CD4-positive, alpha-beta memory T cell (primary cell): ENCODE measurements at regions of chr2 and their contacts with region 1.

Region 1: GRCh38 chr2:181312515-181312927 is 144.7 kb upstream of the ITGA4 start:
- DNase-seq: peak; percentile 38 to 55 (median 45)
- H3K4me3 ChIP-seq: peak overlapping the region in 1 of 2 donors; percentile 27
- H3K4me3 Mint-ChIP-seq: peak overlapping the region; percentile 12 to 77 (median 71)
- H3K27ac ChIP-seq: peak overlapping the region; percentile 46
- H3K27ac Mint-ChIP-seq: peak overlapping the region; percentile 88 to 97 (median 95)
- H3K4me1 ChIP-seq: peaks cover 75% of the 10 kb centered on the region
- H3K4me1 Mint-ChIP-seq: peaks cover 34 to 56% (median 46%) of the 10 kb centered on the region in 4 donors
- H3K27me3 ChIP-seq: no peaks in the 10 kb centered on the region
- H3K27me3 Mint-ChIP-seq: no peaks in the 10 kb centered on the region

Region 2: GRCh38 chr2:180980106-180980942 is 332.2 kb before region 1 on chr2 and contains the start of gene UBE2E3:
- CTCF ChIA-PET with region 1: no interaction called
- POLR2A ChIA-PET with region 1: no interaction called
- intact Hi-C with region 1: no loop called
- DNase-seq: peak; percentile 77 to 83 (median 81)
- H3K4me3 ChIP-seq: peak within 1 kb of the TSS; percentile 59
- H3K4me3 Mint-ChIP-seq: peak within 1 kb of the TSS; percentile 94 to 99 (median 98)
- H3K27ac ChIP-seq: peak within 1 kb of the TSS; percentile 49
- H3K27ac Mint-ChIP-seq: peak within 1 kb of the TSS; percentile 89 to 98 (median 97)
- H3K4me1 ChIP-seq: peaks cover 35% of the 10 kb centered on the region
- H3K4me1 Mint-ChIP-seq: peaks cover 29 to 55% (median 44%) of the 10 kb centered on the region in 4 donors
- H3K27me3 ChIP-seq: no peaks in the 10 kb centered on the region
- H3K27me3 Mint-ChIP-seq: no peaks in the 10 kb centered on the region
- total RNA-seq, gene UBE2E3: 25.0 to 27.0 TPM

Region 3: GRCh38 chr2:181140414-181140813 is 172.1 kb before region 1 on chr2:
- CTCF ChIA-PET with region 1: interaction called, 3 read pairs
- POLR2A ChIA-PET with region 1: interaction called, 20 read pairs
- intact Hi-C with region 1: no loop called
- DNase-seq: peak in 1 of 5 donors; percentile 66
- H3K4me3 ChIP-seq: no peak overlapping the region
- H3K4me3 Mint-ChIP-seq: peak overlapping the region in 7 of 8 donors; percentile 61 to 91 (median 82)
- H3K27ac ChIP-seq: peak overlapping the region; percentile 74
- H3K27ac Mint-ChIP-seq: peak overlapping the region; percentile 86 to 99 (median 98)
- H3K4me1 ChIP-seq: peaks cover 72% of the 10 kb centered on the region
- H3K4me1 Mint-ChIP-seq: peaks cover 44 to 78% (median 58%) of the 10 kb centered on the region in 4 donors
- H3K27me3 ChIP-seq: no peaks in the 10 kb centered on the region
- H3K27me3 Mint-ChIP-seq: no peaks in the 10 kb centered on the region

Region 4: DNA sequence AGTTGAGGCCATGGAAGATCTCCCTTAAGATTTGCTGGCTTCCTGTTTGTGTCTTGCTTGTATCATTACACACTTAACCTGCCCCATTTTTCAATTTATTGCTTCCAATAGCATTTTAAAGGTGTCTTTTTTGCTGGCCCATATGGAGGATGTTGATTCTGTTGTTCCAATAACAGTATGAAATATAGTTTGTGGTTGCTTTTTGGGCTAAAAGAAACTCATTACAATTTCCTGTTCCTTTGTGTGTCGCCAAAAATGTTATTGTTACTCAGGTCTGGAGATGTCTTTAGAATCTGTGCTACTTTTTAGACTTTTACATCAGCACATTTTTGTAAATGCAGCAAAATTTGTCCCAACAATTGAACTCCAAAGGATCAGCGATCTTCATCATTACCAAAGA is 89.3 kb before region 1 on chr2:
- CTCF ChIA-PET with region 1: no interaction called
- POLR2A ChIA-PET with region 1: interaction called, 14 read pairs
- intact Hi-C with region 1: loop called (anchors 2 kb)
- DNase-seq: peak in 4 of 5 donors; percentile 35 to 63 (median 48)
- H3K4me3 ChIP-seq: no peak overlapping the region
- H3K4me3 Mint-ChIP-seq: peak overlapping the region in 7 of 8 donors; percentile 53 to 86 (median 65)
- H3K27ac ChIP-seq: peak overlapping the region; percentile 61
- H3K27ac Mint-ChIP-seq: peak overlapping the region; percentile 88 to 99 (median 94)
- H3K4me1 ChIP-seq: peaks cover 37% of the 10 kb centered on the region
- H3K4me1 Mint-ChIP-seq: peaks cover 22 to 40% (median 29%) of the 10 kb centered on the region in 4 donors
- H3K27me3 ChIP-seq: no peaks in the 10 kb centered on the region
- H3K27me3 Mint-ChIP-seq: no peaks in the 10 kb centered on the region

Region 5: GRCh38 chr2:181275643-181276070 is 36.9 kb before region 1 on chr2:
- CTCF ChIA-PET with region 1: interaction called, 4 read pairs
- POLR2A ChIA-PET with region 1: interaction called, 12 read pairs
- intact Hi-C with region 1: no loop called
- DNase-seq: peak; percentile 17 to 45 (median 43)
- H3K4me3 ChIP-seq: no peak overlapping the region
- H3K4me3 Mint-ChIP-seq: peak overlapping the region in 6 of 8 donors; percentile 12 to 69 (median 40)
- H3K27ac ChIP-seq: peak overlapping the region; percentile 31
- H3K27ac Mint-ChIP-seq: peak overlapping the region; percentile 57 to 92 (median 78)
- H3K4me1 ChIP-seq: peaks cover 40% of the 10 kb centered on the region
- H3K4me1 Mint-ChIP-seq: peaks cover 26 to 54% (median 37%) of the 10 kb centered on the region in 4 donors
- H3K27me3 ChIP-seq: no peaks in the 10 kb centered on the region
- H3K27me3 Mint-ChIP-seq: no peaks in the 10 kb centered on the region

Region 6: DNA sequence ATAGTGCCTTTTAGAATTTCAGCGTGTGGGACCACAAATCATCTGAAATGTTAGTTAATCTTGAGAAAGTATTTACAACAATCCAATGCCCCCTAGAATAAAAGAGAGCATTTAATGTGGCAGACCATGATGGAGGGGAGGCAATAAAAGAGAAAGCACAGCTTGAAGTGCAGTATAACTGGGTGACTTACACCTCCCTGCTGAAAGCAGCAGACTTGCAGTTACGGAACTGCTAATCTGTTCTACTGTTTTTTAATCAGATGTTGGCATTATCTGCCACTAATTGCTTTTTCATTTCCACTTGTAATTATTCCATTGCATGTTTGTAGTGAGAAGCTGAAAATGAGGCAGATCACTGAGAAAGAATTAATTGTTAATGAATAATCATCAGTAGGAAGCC is 14.1 kb after region 1 on chr2:
- CTCF ChIA-PET with region 1: interaction called, 6 read pairs
- POLR2A ChIA-PET with region 1: interaction called, 10 read pairs
- intact Hi-C with region 1: no loop called
- DNase-seq: no peak
- H3K4me3 ChIP-seq: no peak overlapping the region
- H3K4me3 Mint-ChIP-seq: no peak overlapping the region
- H3K27ac ChIP-seq: no peak overlapping the region
- H3K27ac Mint-ChIP-seq: no peak overlapping the region
- H3K4me1 ChIP-seq: no peaks in the 10 kb centered on the region
- H3K4me1 Mint-ChIP-seq: peaks cover 0 to 12% (median 3%) of the 10 kb centered on the region in 4 donors
- H3K27me3 ChIP-seq: no peaks in the 10 kb centered on the region
- H3K27me3 Mint-ChIP-seq: no peaks in the 10 kb centered on the region

Region 7: DNA sequence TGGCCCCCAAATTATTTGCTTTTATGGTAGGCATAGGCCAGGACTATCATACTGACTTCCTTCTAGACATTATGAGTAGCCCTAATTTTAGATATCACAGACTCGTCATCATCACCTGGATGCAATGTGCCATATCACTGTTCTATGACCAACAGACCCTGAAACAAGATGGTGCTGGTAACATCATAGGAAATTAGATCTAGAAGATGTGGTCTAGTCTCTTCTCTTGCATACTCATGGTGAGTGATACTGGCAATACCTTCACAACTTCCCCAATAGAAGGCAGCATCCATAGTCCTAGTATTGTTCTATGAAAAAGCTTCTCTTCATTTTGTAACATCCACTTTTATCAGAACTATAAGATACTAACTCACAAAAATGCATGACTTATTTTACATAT is 28.4 kb after region 1 on chr2:
- CTCF ChIA-PET with region 1: no interaction called
- POLR2A ChIA-PET with region 1: no interaction called
- intact Hi-C with region 1: no loop called
- DNase-seq: no peak
- H3K4me3 ChIP-seq: no peak overlapping the region
- H3K4me3 Mint-ChIP-seq: no peak overlapping the region
- H3K27ac ChIP-seq: no peak overlapping the region
- H3K27ac Mint-ChIP-seq: no peak overlapping the region
- H3K4me1 ChIP-seq: no peaks in the 10 kb centered on the region
- H3K4me1 Mint-ChIP-seq: peaks cover 0 to 5% (median 1%) of the 10 kb centered on the region in 4 donors
- H3K27me3 ChIP-seq: no peaks in the 10 kb centered on the region
- H3K27me3 Mint-ChIP-seq: no peaks in the 10 kb centered on the region

Region 8: GRCh38 chr2:181371782-181372645 is 59.5 kb after region 1 on chr2:
- CTCF ChIA-PET with region 1: interaction called, 4 read pairs
- POLR2A ChIA-PET with region 1: interaction called, 19 read pairs
- intact Hi-C with region 1: no loop called
- DNase-seq: peak in 1 of 5 donors; percentile 13
- H3K4me3 ChIP-seq: no peak overlapping the region
- H3K4me3 Mint-ChIP-seq: peak overlapping the region in 7 of 8 donors; percentile 18 to 70 (median 33)
- H3K27ac ChIP-seq: no peak overlapping the region
- H3K27ac Mint-ChIP-seq: peak overlapping the region; percentile 40 to 90 (median 83)
- H3K4me1 ChIP-seq: peaks cover 28% of the 10 kb centered on the region
- H3K4me1 Mint-ChIP-seq: peaks cover 17 to 43% (median 30%) of the 10 kb centered on the region in 4 donors
- H3K27me3 ChIP-seq: no peaks in the 10 kb centered on the region
- H3K27me3 Mint-ChIP-seq: no peaks in the 10 kb centered on the region